Activated CD4-positive, alpha-beta memory T cell treated with anti-CD3 and anti-CD28 coated beads, Interleukin-2, amount 10 ng/mL, durations not matched to agents 7 days and 5 days (primary cell): ENCODE measurements at regions of chr20 and their contacts with region 1.

Region 1: GRCh38 chr20:38434743-38435554 is at the start of gene SNHG17:
- DNase-seq: peak; percentile 89
- H3K4me3 Mint-ChIP-seq: peak within 1 kb of the TSS; percentile 97
- H3K27ac Mint-ChIP-seq: peak within 1 kb of the TSS; percentile 89
- H3K4me1 Mint-ChIP-seq: peaks cover 37% of the 10 kb centered on the region
- H3K27me3 Mint-ChIP-seq: no peaks in the 10 kb centered on the region
- total RNA-seq, gene SNHG17: 30.1 to 33.4 TPM

Region 2: DNA sequence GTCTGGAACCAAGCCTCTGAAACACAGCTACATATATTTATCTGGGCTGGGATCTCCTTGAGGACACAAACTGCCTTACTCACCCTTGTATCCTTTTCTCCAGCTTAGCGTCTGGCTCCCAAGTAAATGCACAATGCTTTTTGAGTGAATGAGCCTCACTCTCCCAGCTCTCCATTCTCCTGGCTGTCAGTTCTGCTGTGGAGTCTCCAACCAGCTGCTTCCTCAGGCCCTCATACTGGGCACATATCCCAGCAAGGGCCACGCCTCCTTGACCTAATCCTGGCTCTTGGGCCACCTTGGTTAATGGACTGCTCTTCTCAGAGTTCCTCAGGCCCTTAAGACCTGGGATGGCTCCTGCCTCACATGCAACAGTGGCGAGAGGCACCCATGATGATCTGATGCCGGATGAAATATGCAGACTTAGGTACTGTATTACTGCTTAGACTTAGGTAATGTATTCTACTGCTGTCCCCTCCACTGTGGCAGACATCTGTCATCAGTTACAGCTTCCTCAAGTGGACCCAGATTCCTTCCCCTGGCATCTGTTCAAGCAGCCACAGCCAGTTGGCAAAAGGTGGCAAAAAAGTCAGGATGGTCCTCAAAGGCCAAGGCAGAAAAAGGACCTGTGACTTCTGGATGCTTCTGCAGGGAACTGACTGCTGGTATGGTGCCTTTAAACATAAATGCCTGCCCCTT is 16.3 kb before region 1 on chr20:
- CTCF ChIA-PET with region 1: interaction called, 8 read pairs
- POLR2A ChIA-PET with region 1: interaction called, 12 read pairs
- DNase-seq: no peak
- H3K4me3 Mint-ChIP-seq: no peak overlapping the region
- H3K27ac Mint-ChIP-seq: no peak overlapping the region
- H3K4me1 Mint-ChIP-seq: peaks cover 5% of the 10 kb centered on the region
- H3K27me3 Mint-ChIP-seq: no peaks in the 10 kb centered on the region

Region 3: DNA sequence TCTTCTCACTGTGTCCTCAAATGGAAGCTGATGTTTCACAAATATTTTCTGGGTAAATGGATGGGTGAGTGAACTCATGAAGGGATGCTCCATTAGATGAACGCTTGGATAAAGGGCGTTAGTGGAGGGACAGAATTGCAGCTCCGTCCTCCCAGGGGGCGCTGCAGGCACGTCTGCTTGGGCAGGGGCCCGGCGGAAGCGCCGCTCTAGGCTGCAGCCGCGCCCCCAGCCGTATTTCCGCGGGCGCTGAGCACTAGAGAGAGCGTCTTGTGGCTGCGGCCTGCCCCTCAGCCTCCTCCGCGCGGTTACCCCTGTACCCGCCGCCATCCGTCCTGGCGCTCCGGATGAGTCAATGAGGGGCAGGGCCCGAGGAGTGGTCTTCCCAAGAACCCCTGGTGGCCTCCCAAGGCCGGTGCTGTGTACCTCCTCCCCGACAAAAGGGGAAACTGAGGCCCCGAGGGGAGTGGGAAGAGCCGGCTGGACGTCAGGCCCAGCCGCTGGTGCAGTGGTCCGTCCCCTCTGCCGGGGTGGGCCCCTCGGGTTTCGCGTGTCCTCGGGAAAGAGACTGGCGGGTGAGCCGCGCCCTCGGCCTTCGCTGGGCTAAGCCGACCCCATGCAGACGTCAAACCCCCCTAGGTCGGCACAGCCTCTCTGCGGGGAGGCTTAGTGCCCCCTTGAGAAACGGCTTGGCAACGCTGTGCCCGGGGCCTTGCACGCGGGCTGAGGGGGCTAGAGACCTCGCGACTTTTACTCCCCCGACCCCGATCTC is 11.7 kb after region 1 on chr20:
- CTCF ChIA-PET with region 1: interaction called, 139 read pairs
- POLR2A ChIA-PET with region 1: interaction called, 179 read pairs
- DNase-seq: peak; percentile 93
- H3K4me3 Mint-ChIP-seq: peak overlapping the region; percentile 74
- H3K27ac Mint-ChIP-seq: peak overlapping the region; percentile 77
- H3K4me1 Mint-ChIP-seq: peaks cover 29% of the 10 kb centered on the region
- H3K27me3 Mint-ChIP-seq: peaks cover 9% of the 10 kb centered on the region

Region 4: DNA sequence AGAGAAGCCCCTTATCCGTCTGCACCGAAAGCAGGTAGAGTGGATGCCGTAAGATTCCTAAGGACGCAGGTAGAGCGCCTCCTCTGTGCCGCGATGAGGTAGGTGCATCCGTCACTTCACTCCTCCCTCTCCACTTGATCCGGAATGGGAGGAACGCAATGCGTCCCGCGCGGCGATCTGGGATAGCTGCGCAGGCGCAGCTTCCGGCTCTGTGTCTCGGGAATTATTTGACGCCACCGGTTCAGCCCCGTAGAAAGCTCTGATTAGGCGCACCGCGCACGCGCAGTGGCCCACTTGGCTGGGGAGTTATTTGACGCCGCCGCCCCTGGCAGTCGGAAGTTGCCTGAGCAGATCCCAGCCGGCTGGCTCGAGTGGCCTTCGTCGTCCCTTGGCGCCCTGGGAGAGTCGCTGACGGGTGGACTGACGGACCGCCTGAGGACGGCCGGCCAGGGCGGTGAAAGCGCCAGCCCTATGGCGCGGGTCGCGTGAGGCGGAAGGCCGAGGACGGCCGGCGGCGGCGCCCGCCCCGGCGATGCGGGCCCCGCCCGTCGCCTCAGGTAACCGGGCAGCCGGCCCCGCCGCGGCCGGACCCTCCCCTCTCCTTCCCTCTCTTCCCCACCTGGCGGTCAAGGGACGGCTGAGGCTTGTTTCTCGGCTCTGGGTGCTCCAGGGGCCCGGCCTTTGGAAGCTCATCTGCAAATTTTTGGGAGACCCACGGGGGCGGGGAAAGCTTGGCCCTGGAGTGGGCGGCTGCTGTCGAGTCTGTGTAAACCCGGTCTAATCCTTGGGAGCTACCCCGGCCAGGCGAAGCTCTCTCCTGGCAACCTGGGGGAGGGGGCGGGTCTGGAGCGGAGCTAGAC is 37.8 kb after region 1 on chr20 and contains the start of gene RALGAPB:
- CTCF ChIA-PET with region 1: interaction called, 28 read pairs
- POLR2A ChIA-PET with region 1: interaction called, 46 read pairs
- DNase-seq: peak; percentile 98
- H3K4me3 Mint-ChIP-seq: peak within 1 kb of the TSS; percentile 79
- H3K27ac Mint-ChIP-seq: peak within 1 kb of the TSS; percentile 66
- H3K4me1 Mint-ChIP-seq: peaks cover 42% of the 10 kb centered on the region
- H3K27me3 Mint-ChIP-seq: peaks cover 10% of the 10 kb centered on the region
- total RNA-seq, gene RALGAPB: 30.5 to 31.3 TPM